H1 (cell line): ENCODE measurements at regions of chr1 and their contacts with region 1.

Region 1: DNA sequence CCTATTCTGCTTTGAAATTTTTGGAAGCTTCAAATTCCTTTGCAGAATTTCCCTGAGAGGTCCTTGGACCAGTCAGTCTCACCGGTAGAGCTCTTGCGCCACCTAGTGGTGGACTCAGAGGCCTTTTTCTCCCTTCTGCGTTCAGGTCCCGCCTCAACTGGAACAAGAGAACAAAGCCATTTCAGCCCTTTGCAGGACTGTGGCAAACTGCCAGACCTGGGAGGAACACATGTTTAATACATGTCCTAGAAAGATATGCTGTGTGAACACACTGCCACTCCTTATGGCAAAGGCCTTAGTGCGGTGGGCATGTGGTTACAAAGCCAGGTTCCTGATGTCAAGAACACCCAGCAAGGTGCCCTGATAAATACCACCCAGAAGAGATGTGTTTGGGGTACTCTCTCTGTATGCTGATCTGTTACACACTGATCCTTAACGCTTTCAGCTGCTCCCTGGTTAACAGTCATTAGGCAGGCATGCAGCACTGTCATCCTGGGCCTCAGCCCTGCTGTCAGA is 82.2 kb upstream of the SSX2IP start:
- DNase-seq: peak; percentile 63 to 94
- H3K4me3 ChIP-seq: no peak overlapping the region
- H3K27ac ChIP-seq: no peak overlapping the region
- H3K4me1 ChIP-seq: peaks cover 0 to 5% (median 3%) of the 10 kb centered on the region in 4 experiments; a peak in 5 of 7 replicates
- H3K27me3 ChIP-seq: no peaks in the 10 kb centered on the region
- CTCF ChIP-seq: peak; percentile 82 to 92 (median 87)
- EP300 ChIP-seq: no peak
- POLR2A ChIP-seq: no peak
- RAD21 ChIP-seq: peak; percentile 97 to 98

Region 2: DNA sequence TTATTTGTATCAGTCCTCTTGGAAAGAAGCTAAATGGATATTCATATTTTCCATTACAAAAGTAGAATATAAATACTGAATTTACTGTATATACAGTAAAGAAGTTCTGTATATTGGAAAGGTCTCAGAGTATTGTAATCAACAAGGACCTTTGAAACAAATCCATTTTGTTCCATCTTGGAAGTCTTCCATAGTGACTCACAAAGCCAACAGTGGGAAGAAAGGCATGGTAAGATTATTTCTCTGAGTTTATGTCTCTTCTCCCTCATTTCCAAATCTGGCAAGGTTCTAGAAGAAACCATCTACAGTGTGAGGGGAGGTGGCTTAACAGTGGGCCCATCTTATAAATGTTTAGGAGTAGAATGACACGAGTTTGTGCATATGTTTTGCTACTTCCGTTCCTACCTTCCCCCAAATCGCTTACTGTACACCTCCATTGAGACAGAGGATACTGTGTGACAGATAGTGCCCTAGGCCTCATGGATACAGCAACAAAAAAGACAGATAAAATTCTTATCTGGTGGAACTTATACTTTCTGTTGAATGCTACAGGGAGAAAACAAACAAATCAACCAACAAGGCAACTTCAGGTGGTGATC is 60.1 kb before region 1 on chr1:
- CTCF ChIA-PET with region 1: no interaction called
- POLR2A ChIA-PET with region 1: no interaction called
- DNase-seq: no peak
- H3K4me3 ChIP-seq: no peak overlapping the region
- H3K27ac ChIP-seq: no peak overlapping the region
- H3K4me1 ChIP-seq: peaks cover 0 to 5% (median 2%) of the 10 kb centered on the region in 4 experiments; a peak in 3 of 7 replicates
- H3K27me3 ChIP-seq: no peaks in the 10 kb centered on the region
- CTCF ChIP-seq: no peak
- EP300 ChIP-seq: no peak
- POLR2A ChIP-seq: no peak
- RAD21 ChIP-seq: no peak

Region 3: GRCh38 chr1:84742653-84743052 is 29.8 kb before region 1 on chr1:
- CTCF ChIA-PET with region 1: interaction called, 14 read pairs
- POLR2A ChIA-PET with region 1: no interaction called
- DNase-seq: no peak
- H3K4me3 ChIP-seq: no peak overlapping the region
- H3K27ac ChIP-seq: no peak overlapping the region
- H3K4me1 ChIP-seq: peaks cover 0 to 14% (median 8%) of the 10 kb centered on the region in 4 experiments; a peak in 5 of 7 replicates
- H3K27me3 ChIP-seq: no peaks in the 10 kb centered on the region
- CTCF ChIP-seq: no peak
- EP300 ChIP-seq: no peak
- POLR2A ChIP-seq: no peak
- RAD21 ChIP-seq: no peak

Region 4: DNA sequence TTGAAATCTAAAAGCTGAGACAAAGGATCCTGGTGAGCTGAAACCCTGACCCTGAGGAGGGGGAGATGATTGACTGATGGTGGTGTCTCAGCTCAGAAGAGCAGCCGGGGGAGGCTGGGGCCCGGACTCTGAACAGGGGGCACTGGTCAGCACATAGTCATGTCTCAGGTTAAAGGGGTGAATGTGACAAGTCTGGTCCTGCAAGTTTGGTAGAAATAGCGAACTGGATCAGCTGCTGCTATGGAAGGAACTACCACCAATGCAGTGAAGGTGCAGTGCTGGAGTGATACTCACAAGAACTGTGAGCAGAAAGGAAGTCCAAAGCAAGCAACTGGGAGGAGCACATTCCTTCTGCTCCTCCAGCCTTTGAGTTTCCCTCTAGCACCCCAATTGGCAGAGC is 16.5 kb after region 1 on chr1:
- CTCF ChIA-PET with region 1: interaction called, 14 read pairs
- POLR2A ChIA-PET with region 1: no interaction called
- DNase-seq: no peak
- H3K4me3 ChIP-seq: no peak overlapping the region
- H3K27ac ChIP-seq: no peak overlapping the region
- H3K4me1 ChIP-seq: peaks cover 0 to 4% (median 1%) of the 10 kb centered on the region in 4 experiments; a peak in 1 of 7 replicates
- H3K27me3 ChIP-seq: no peaks in the 10 kb centered on the region
- CTCF ChIP-seq: no peak
- EP300 ChIP-seq: no peak
- POLR2A ChIP-seq: no peak
- RAD21 ChIP-seq: no peak

Region 5: GRCh38 chr1:84936116-84936810 is 163.8 kb after region 1 on chr1:
- CTCF ChIA-PET with region 1: interaction called, 59 read pairs
- POLR2A ChIA-PET with region 1: no interaction called
- DNase-seq: peak in 1 of 2 experiments; percentile 53
- H3K4me3 ChIP-seq: no peak overlapping the region
- H3K27ac ChIP-seq: no peak overlapping the region
- H3K4me1 ChIP-seq: no peaks in the 10 kb centered on the region
- H3K27me3 ChIP-seq: no peaks in the 10 kb centered on the region
- CTCF ChIP-seq: peak in 2 of 3 experiments; percentile 79 to 83; a peak in 3 of 4 replicates
- EP300 ChIP-seq: no peak
- POLR2A ChIP-seq: no peak
- RAD21 ChIP-seq: peak; percentile 95 to 97